ENCODE measurements at regions of chr7 and their contacts with region 1.

Region 1: DNA sequence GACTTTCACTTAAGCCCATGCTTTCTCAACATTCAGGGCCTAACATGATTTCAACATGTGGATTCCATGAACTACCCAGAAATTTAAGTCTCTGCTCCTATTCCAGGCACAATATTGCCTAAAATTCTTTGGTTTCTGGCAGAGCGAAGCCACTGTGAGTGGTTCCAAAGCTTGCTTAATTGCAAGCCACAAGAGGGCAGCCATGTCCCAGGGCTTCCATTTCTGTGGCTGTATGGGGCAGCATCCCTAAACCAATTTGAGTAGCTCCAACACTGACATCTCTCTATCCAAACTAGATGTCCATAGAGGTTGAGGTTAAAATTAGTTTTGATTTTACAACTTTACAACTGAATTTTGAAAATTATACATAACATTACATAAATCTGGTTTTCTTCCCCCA is 56.3 kb upstream of the MDFIC start:
- DNase-seq: peak; percentile 25
- ATAC-seq: peak; percentile 99
- H3K4me3 ChIP-seq: no peak overlapping the region
- H3K27ac ChIP-seq: no peak overlapping the region
- H3K4me1 ChIP-seq: no peaks in the 10 kb centered on the region
- H3K27me3 ChIP-seq: no peaks in the 10 kb centered on the region
- CTCF ChIP-seq: peak; percentile 78 to 88 (median 79)
- EP300 ChIP-seq: no peak
- POLR2A ChIP-seq: no peak
- RAD21 ChIP-seq: peak; percentile 98

Region 2: DNA sequence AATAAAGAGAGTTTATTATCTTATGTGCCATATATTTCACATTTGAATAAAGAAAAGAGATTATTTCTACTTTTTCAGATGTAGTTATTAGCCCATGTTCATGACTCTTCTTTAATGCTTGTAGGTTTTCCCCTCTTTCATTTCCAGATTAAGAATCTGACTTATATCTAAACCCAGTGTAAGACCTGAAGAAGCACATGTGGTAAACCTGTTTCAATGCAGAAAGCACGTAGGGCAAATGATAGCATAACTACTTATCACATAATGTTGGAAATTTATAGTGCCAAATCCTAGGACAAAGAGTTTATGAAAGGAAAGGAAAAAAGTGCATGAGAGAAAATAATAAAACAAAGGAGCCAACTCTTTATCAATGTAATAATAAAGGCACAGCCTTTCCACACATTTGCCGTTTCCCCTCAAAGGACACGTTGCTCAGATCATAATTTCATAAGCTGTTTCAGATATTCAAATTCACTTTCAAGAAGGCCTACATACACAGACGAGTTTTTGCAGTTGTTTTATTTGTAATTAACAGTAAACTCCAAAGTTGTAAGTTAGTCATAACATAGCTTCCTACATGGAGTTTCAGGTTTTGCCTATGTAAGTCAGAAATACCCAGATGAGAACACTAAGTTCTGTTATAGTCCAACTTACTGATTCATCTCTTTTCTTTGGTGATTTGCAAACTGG is 32.5 kb before region 1 on chr7:
- CTCF ChIA-PET with region 1: interaction called, 8 read pairs
- POLR2A ChIA-PET with region 1: no interaction called
- RAD21 ChIA-PET with region 1: no interaction called
- SMC1A ChIA-PET with region 1: interaction called, 10 read pairs
- in situ Hi-C with region 1: no loop called
- intact Hi-C with region 1: no loop called
- DNase-seq: peak; percentile 48
- ATAC-seq: peak; percentile 90
- H3K4me3 ChIP-seq: no peak overlapping the region
- H3K27ac ChIP-seq: peak overlapping the region; percentile 74
- H3K4me1 ChIP-seq: peaks cover 16% of the 10 kb centered on the region; the same call in 1 of the 2 replicates
- H3K27me3 ChIP-seq: no peaks in the 10 kb centered on the region
- CTCF ChIP-seq: no peak
- EP300 ChIP-seq: peak; percentile 3 to 53; a peak in 1 of 4 replicates
- POLR2A ChIP-seq: no peak
- RAD21 ChIP-seq: no peak

Region 3: DNA sequence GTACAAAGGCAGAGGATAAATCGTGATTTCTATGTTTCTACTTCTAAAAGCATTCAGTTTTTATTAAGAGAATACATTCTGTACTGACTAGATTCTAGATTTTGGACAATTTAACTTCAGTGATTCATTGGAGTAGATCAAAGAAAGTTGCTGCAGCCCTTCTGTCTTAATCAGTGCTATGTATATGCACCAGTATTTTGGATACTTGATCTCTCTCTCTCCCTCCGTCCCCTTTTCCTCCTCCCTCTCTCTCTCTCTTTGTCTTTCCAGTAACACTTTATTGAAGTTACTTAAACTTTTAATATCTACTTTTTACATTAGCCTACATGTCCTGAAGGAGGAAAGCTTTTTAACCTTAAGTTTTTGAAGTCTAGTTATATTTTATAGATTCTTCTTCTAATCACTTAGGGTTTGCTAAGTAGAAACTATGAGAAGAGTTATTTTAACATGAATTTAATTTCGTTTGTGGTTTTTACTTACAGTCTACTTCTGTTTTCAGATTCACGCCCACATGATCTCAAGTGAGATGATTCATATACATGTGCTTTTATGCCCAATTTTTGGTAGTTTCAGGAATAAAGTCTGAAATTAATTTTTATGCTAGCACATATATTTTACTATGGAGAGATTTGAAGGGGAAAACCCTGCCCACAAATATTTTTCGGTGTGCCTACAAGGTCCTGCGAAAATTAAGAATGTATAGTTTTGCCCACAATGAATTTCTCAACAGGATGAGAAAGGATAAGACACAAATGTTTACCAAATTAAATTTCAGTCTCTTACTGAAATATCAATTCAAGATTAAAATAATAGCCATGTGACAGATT is 65.5 kb after region 1 on chr7:
- CTCF ChIA-PET with region 1: interaction called, 24 read pairs
- POLR2A ChIA-PET with region 1: interaction called, 6 read pairs
- RAD21 ChIA-PET with region 1: interaction called, 42 read pairs
- SMC1A ChIA-PET with region 1: interaction called, 67 read pairs
- in situ Hi-C with region 1: no loop called
- intact Hi-C with region 1: loop called (anchors 5 kb)
- DNase-seq: no peak
- ATAC-seq: peak; percentile 49
- H3K4me3 ChIP-seq: peak overlapping the region; percentile 62
- H3K27ac ChIP-seq: peak overlapping the region; percentile 92
- H3K4me1 ChIP-seq: peaks cover 26% of the 10 kb centered on the region
- H3K27me3 ChIP-seq: no peaks in the 10 kb centered on the region
- CTCF ChIP-seq: no peak
- EP300 ChIP-seq: peak in 1 of 2 experiments; percentile 73; a peak in 2 of 4 replicates
- POLR2A ChIP-seq: no peak
- RAD21 ChIP-seq: no peak

Region 4: DNA sequence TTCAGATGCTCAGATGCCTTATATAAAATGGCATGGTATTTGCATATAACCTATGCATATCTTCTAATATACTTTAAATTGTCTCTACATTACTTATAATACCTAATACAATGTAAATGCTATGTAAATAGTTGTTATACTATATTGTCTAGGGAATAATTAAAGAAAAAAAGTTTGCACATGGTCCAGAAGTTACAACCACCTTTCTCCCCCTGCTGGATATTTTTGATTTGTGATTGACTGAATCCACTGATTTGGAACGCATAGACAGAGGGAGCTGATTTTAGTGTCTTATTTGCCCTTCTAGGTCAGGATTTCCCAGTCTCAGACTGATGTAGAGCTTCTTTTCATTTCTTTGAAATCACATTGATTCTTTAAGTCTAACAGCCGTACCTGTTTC is 88.2 kb after region 1 on chr7:
- CTCF ChIA-PET with region 1: interaction called, 7 read pairs
- POLR2A ChIA-PET with region 1: interaction called, 3 read pairs
- RAD21 ChIA-PET with region 1: interaction called, 6 read pairs
- SMC1A ChIA-PET with region 1: interaction called, 12 read pairs
- in situ Hi-C with region 1: no loop called
- intact Hi-C with region 1: no loop called
- DNase-seq: no peak
- ATAC-seq: peak; percentile 10; the same call in 1 of the 3 replicates
- H3K4me3 ChIP-seq: no peak overlapping the region
- H3K27ac ChIP-seq: no peak overlapping the region
- H3K4me1 ChIP-seq: peaks cover 12% of the 10 kb centered on the region; the same call in 1 of the 2 replicates
- H3K27me3 ChIP-seq: no peaks in the 10 kb centered on the region
- CTCF ChIP-seq: no peak
- EP300 ChIP-seq: no peak
- POLR2A ChIP-seq: no peak
- RAD21 ChIP-seq: no peak; the same call in 1 of the 2 replicates

Region 5: DNA sequence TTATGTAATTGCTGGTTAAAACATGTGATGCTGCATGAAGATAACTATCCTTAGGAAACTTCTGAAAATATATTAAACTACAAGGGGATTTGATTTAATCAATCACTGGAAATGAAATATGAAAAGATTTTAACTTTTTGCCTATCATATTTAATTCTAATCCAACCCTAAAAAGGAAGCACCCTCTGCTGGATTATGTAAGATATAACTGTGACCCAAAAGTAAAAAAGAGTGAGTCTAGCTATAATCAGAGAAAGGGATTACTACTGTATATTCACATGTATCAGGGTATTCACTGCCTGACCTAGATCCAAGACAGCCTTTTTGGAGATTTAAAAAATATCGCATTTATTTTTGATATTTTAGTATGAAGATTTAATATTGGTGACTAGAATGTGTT is 351.8 kb after region 1 on chr7:
- CTCF ChIA-PET with region 1: interaction called, 102 read pairs
- POLR2A ChIA-PET with region 1: no interaction called
- RAD21 ChIA-PET with region 1: interaction called, 100 read pairs
- SMC1A ChIA-PET with region 1: interaction called, 96 read pairs
- in situ Hi-C with region 1: loop called (anchors 10 kb)
- intact Hi-C with region 1: loop called (anchors 1 kb)
- DNase-seq: no peak
- ATAC-seq: 0 out of 3 replicates have a peak, but pooled peaks have one; percentile 41
- H3K4me3 ChIP-seq: no peak overlapping the region
- H3K27ac ChIP-seq: no peak overlapping the region
- H3K4me1 ChIP-seq: no peaks in the 10 kb centered on the region
- H3K27me3 ChIP-seq: no peaks in the 10 kb centered on the region
- CTCF ChIP-seq: peak; percentile 13 to 38 (median 20); a peak in 3 of 6 replicates
- EP300 ChIP-seq: no peak
- POLR2A ChIP-seq: no peak
- RAD21 ChIP-seq: peak; percentile 58

Region 6: DNA sequence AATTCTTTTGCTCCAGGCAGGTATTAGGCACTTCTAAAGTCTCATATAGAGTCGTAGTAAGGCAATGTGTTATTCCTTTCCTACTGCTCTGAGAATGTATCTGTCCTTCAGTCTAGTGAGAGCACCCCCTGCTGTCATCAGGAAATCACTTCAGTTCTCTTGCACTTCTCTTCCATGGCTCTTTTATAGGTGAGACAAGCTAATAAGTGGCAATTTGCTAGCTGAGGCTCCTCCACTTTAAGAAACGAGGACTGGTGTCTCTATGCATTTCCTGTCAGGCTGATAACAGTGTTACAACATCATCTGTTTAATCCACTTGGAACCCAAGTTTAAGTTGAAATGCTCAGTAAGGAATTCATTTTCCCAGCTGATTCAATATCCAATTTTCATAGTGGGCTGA is 814.4 kb after region 1 on chr7:
- CTCF ChIA-PET with region 1: interaction called, 21 read pairs
- POLR2A ChIA-PET with region 1: no interaction called
- RAD21 ChIA-PET with region 1: interaction called, 5 read pairs
- SMC1A ChIA-PET with region 1: interaction called, 6 read pairs
- in situ Hi-C with region 1: no loop called
- intact Hi-C with region 1: loop called (anchors 10 kb)
- DNase-seq: peak; percentile 5
- ATAC-seq: peak; percentile 89
- H3K4me3 ChIP-seq: no peak overlapping the region
- H3K27ac ChIP-seq: no peak overlapping the region
- H3K4me1 ChIP-seq: no peaks in the 10 kb centered on the region
- H3K27me3 ChIP-seq: no peaks in the 10 kb centered on the region
- CTCF ChIP-seq: peak; percentile 37 to 49 (median 44); a peak in 3 of 6 replicates
- EP300 ChIP-seq: no peak
- POLR2A ChIP-seq: no peak
- RAD21 ChIP-seq: peak; percentile 47

Measured in GM12878 (cell line).